PC-9 (cell line): ENCODE measurements at regions of chr12 and their contacts with region 1.

Region 1: GRCh38 chr12:122421821-122422729 is at the start of gene CLIP1:
- DNase-seq: peak; percentile 67 to 83
- H3K4me3 ChIP-seq: peak within 1 kb of the TSS; percentile 71
- H3K27ac ChIP-seq: peak within 1 kb of the TSS; percentile 96
- H3K4me1 ChIP-seq: peaks cover 30% of the 10 kb centered on the region
- H3K27me3 ChIP-seq: no peaks in the 10 kb centered on the region
- CTCF ChIP-seq: peak; percentile 38; the same call in 1 of the 2 replicates
- total RNA-seq, gene CLIP1: 80.8 and 86.9 TPM in 2 replicates

Region 2: DNA sequence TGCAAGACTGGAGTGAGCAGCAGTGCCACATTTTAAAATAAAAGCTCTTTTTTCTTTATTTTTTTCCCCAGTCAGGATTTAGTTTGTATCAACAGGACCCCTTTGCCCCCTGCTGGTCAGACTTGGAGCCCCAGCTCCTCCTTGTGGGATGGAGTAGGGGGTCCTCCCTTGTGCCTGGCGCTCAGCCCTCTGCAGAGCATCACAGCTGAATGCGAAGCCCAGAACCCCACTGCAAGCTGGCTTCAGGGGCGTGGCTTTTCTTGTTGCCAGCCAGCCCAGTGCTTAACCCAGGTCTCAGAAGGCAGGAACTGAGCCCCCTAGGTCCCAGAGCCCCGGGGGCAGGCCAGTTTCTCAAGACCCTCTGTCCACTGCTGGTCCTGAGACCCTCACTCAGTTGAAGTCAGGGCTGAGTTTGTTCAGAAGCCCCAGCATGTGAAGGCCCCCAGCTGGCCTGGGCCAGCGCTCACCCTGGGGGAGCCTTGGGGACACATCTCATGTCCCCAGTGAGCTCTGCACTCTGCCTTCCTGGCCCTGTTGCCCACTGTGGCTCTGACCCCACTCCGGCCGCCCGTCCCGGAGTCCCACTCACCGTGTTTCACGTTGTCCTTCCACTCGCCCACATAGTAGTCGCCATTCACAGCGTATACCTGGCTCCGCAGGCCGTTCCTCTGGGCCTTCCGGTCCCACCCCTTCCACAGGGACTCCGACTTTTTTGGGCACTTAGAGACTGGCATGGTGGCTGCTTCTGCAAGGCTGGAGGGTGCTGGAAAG is 753.1 kb before region 1 on chr12:
- CTCF ChIA-PET with region 1: no interaction called
- POLR2A ChIA-PET with region 1: interaction called, 10 read pairs
- intact Hi-C with region 1: no loop called
- DNase-seq: peak in 1 of 2 experiments; percentile 18
- H3K4me3 ChIP-seq: no peak overlapping the region
- H3K27ac ChIP-seq: no peak overlapping the region
- H3K4me1 ChIP-seq: peaks cover 42% of the 10 kb centered on the region
- H3K27me3 ChIP-seq: no peaks in the 10 kb centered on the region
- CTCF ChIP-seq: peak; percentile 62; the same call in 1 of the 2 replicates

Region 3: DNA sequence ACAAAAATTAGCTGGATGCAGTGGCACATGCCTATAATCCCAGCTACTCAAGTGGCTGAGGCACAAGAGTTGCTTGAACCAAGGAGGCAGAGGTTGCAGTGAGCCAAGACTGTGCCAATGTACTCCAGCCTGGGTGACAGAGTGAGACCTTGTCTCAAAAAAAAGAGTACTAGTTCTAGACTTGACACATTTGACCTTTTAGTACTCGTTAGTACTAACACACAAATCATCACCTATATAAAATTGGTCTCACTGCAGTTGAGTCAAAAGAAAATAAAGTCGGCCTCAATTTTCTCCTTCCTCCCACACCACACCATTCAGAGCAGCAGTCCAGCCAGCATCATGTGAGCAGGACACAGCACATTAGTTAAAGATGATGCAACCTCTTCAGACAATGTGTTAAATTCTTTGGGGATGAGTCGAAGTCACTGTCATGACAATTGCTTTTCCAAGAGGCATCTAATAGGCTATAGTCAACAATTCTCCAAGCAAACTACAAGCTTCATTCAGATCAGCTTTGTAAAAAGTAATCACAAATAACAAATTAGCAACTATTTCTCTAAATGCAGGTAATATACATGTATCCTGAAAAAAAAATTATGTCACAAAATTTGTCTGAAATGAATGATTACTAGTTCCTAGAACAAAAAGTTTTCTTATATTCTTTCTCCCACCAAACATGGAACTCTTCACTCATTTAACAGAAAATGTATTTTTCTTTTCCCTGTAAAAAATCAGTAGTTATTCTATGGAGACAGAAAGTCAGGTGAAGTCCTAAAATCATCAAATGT is 55.2 kb before region 1 on chr12:
- CTCF ChIA-PET with region 1: no interaction called
- POLR2A ChIA-PET with region 1: no interaction called
- intact Hi-C with region 1: loop called (anchors 1 kb)
- DNase-seq: peak; percentile 10 to 71
- H3K4me3 ChIP-seq: no peak overlapping the region
- H3K27ac ChIP-seq: peak overlapping the region; percentile 79
- H3K4me1 ChIP-seq: peaks cover 18% of the 10 kb centered on the region
- H3K27me3 ChIP-seq: no peaks in the 10 kb centered on the region
- CTCF ChIP-seq: no peak

Region 4: DNA sequence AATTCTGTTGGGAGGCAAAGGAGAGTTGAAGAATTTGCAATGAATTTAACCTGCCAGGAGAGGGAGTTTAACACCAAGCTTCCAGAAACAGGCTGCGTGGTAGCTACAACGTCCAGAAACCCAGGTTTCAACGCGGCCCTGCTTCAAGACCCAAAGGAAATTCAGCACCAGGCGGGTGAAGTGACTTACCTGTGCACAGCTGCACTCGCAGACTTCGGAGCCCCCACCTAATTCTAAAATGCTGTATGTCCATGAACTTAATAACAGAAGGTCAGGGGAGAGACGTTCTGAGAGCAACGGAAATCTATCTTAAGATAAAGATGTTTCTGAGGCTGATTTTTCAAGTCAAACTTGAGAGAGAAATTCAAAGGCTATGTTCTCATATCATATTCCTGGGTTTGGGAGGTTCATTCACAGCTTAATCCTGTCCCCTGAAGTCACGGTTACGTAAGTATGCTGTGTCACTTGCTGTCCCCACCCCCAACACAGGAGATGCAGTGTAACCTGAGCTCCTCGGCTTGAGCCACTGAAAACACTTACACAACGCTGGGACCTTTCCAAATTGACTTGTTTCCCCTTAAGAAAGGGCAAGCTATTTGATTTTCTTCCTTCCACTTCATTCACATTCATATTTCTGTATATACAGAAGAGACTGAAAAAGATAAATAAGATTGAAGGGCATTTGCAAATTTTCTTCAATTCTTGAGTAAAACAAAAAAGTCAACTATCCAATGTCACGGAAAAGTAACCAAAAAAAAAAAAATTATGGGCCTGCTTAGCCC is 22.3 kb before region 1 on chr12:
- CTCF ChIA-PET with region 1: interaction called, 10 read pairs
- POLR2A ChIA-PET with region 1: interaction called, 24 read pairs
- intact Hi-C with region 1: loop called (anchors 1 kb)
- DNase-seq: peak; percentile 82 to 90
- H3K4me3 ChIP-seq: peak overlapping the region; percentile 46; the same call in 1 of the 2 replicates
- H3K27ac ChIP-seq: peak overlapping the region; percentile 100
- H3K4me1 ChIP-seq: peaks cover 26% of the 10 kb centered on the region
- H3K27me3 ChIP-seq: no peaks in the 10 kb centered on the region
- CTCF ChIP-seq: peak; percentile 80

Region 5: GRCh38 chr12:122459211-122459610 is 37.1 kb after region 1 on chr12:
- CTCF ChIA-PET with region 1: interaction called, 3 read pairs
- POLR2A ChIA-PET with region 1: no interaction called
- intact Hi-C with region 1: loop called (anchors 1 kb)
- DNase-seq: no peak
- H3K4me3 ChIP-seq: no peak overlapping the region
- H3K27ac ChIP-seq: no peak overlapping the region
- H3K4me1 ChIP-seq: peaks cover 15% of the 10 kb centered on the region
- H3K27me3 ChIP-seq: no peaks in the 10 kb centered on the region
- CTCF ChIP-seq: no peak

Region 6: GRCh38 chr12:122635471-122635870 is 213.4 kb after region 1 on chr12:
- CTCF ChIA-PET with region 1: no interaction called
- POLR2A ChIA-PET with region 1: no interaction called
- intact Hi-C with region 1: no loop called
- DNase-seq: no peak
- H3K4me3 ChIP-seq: no peak overlapping the region
- H3K27ac ChIP-seq: no peak overlapping the region
- H3K4me1 ChIP-seq: no peaks in the 10 kb centered on the region
- H3K27me3 ChIP-seq: no peaks in the 10 kb centered on the region
- CTCF ChIP-seq: no peak